ENCODE measurements at regions of chr6 and their contacts with region 1.

Region 1: GRCh38 chr6:150514599-150515401 is 84.9 kb upstream of the PLEKHG1 start:
- DNase-seq: no peak
- ATAC-seq: no peak

Region 2: GRCh38 chr6:150466196-150466595 is 48.6 kb before region 1 on chr6:
- intact Hi-C with region 1: loop called (anchors 10 kb)
- DNase-seq: no peak
- ATAC-seq: no peak

Region 3: DNA sequence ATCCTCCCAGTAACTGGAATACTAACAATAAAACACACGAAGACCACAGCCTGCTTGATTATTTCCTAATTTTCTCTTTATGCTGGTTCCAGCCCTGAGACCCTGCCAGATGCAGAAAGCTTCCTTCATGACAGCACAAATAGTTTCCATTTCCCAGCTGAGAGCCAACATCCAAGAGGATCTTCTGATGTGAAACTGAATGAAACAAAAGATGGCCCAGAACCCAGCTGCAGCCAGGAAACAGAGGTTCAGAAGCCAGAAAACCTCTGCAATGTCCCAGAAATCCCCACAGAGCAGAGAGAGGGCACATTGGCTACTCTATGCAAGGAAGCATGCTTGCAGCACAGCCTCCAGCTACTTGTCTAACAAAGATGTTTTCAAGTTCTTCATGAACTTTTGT is 23.1 kb after region 1 on chr6:
- intact Hi-C with region 1: no loop called
- DNase-seq: no peak
- ATAC-seq: peak; percentile 91

Region 4: GRCh38 chr6:150666071-150666470 is 151.3 kb after region 1 on chr6:
- intact Hi-C with region 1: no loop called
- DNase-seq: no peak
- ATAC-seq: peak; percentile 54

Measured in sciatic nerve (tissue), 2 donors.